B cell (primary cell): ENCODE measurements at regions of chr18 and their contacts with region 1.

Region 1: GRCh38 chr18:76922107-76922506 is 99.8 kb downstream of the ZNF236 start:
- DNase-seq: peak; percentile 83
- ATAC-seq: peak; percentile 100
- H3K4me3 ChIP-seq: no peak overlapping the region
- H3K4me3 Mint-ChIP-seq: peak overlapping the region; percentile 3
- H3K27ac ChIP-seq: no peak overlapping the region
- H3K27ac Mint-ChIP-seq: peak overlapping the region; percentile 68
- H3K4me1 ChIP-seq: peaks cover 0 to 9% of the 10 kb centered on the region in 2 donors
- H3K4me1 Mint-ChIP-seq: peaks cover 10% of the 10 kb centered on the region
- H3K27me3 ChIP-seq: no peaks in the 10 kb centered on the region
- H3K27me3 Mint-ChIP-seq: no peaks in the 10 kb centered on the region
- CTCF ChIP-seq: peak; percentile 83

Region 2: GRCh38 chr18:76932026-76932819 is 10.1 kb after region 1 on chr18:
- CTCF ChIA-PET with region 1: interaction called, 12 read pairs
- POLR2A ChIA-PET with region 1: no interaction called
- intact Hi-C with region 1: no loop called
- DNase-seq: no peak
- ATAC-seq: no peak
- H3K4me3 ChIP-seq: no peak overlapping the region
- H3K4me3 Mint-ChIP-seq: no peak overlapping the region
- H3K27ac ChIP-seq: no peak overlapping the region
- H3K27ac Mint-ChIP-seq: no peak overlapping the region
- H3K4me1 ChIP-seq: no peaks in the 10 kb centered on the region
- H3K4me1 Mint-ChIP-seq: peaks cover 6% of the 10 kb centered on the region
- H3K27me3 ChIP-seq: no peaks in the 10 kb centered on the region
- H3K27me3 Mint-ChIP-seq: no peaks in the 10 kb centered on the region
- CTCF ChIP-seq: no peak

Region 3: GRCh38 chr18:76977108-76977621 is 55.1 kb after region 1 on chr18:
- CTCF ChIA-PET with region 1: interaction called, 359 read pairs
- POLR2A ChIA-PET with region 1: interaction called, 16 read pairs
- intact Hi-C with region 1: no loop called
- DNase-seq: no peak
- ATAC-seq: no peak
- H3K4me3 ChIP-seq: no peak overlapping the region
- H3K4me3 Mint-ChIP-seq: peak overlapping the region; percentile 20
- H3K27ac ChIP-seq: peak overlapping the region in 1 of 2 donors; percentile 18
- H3K27ac Mint-ChIP-seq: peak overlapping the region; percentile 82
- H3K4me1 ChIP-seq: peaks cover 52 to 53% of the 10 kb centered on the region in 2 donors
- H3K4me1 Mint-ChIP-seq: peaks cover 62% of the 10 kb centered on the region
- H3K27me3 ChIP-seq: no peaks in the 10 kb centered on the region
- H3K27me3 Mint-ChIP-seq: no peaks in the 10 kb centered on the region
- CTCF ChIP-seq: no peak

Region 4: GRCh38 chr18:77054606-77055428 is 132.7 kb after region 1 on chr18:
- CTCF ChIA-PET with region 1: interaction called, 17 read pairs
- POLR2A ChIA-PET with region 1: no interaction called
- intact Hi-C with region 1: loop called (anchors 2 kb)
- DNase-seq: peak; percentile 91
- ATAC-seq: peak; percentile 69
- H3K4me3 ChIP-seq: peak overlapping the region; percentile 32 to 41 (median 38)
- H3K4me3 Mint-ChIP-seq: peak overlapping the region; percentile 89
- H3K27ac ChIP-seq: peak overlapping the region; percentile 92 to 96
- H3K27ac Mint-ChIP-seq: peak overlapping the region; percentile 96
- H3K4me1 ChIP-seq: peaks cover 56 to 61% of the 10 kb centered on the region in 2 donors
- H3K4me1 Mint-ChIP-seq: peaks cover 68% of the 10 kb centered on the region
- H3K27me3 ChIP-seq: no peaks in the 10 kb centered on the region
- H3K27me3 Mint-ChIP-seq: no peaks in the 10 kb centered on the region
- CTCF ChIP-seq: peak; percentile 64

Region 5: DNA sequence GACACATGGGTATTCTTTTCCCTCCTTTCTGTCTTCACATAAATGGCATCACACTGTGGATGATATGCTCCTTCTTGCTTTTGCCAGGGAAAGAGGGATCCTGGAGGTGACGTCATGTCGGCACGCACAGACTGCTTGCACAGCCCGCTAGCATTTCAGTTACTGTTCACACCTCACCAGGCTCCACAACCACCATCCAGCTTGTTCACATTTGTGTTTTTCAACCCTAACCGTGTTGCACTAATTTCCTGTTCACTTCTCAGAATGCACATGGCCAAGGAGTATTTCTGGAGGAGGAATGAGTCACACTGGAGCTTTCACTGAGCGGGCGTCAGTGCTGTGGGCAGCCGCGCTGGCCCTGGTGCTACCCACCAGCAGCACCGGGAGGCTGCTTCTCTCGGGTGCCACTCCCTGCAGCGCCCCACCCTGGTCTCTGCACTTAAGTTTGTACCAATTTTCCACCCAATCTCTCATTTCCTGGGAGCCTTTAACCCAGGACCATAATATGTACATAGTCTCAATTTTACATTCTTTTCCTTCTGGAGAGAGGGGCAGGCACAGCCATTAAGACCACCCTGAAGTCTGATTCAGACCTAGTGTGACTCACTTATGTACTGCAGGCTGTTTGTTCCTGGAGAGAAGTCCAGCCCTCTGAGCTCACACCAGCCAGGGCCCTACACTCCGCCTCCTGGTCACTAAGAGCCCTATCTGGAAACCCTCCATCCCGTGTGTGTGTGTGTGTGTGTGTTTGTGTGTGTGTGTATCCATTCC is 145.4 kb after region 1 on chr18:
- CTCF ChIA-PET with region 1: interaction called, 16 read pairs
- POLR2A ChIA-PET with region 1: no interaction called
- intact Hi-C with region 1: loop called (anchors 1 kb)
- DNase-seq: peak; percentile 48
- ATAC-seq: peak; percentile 24
- H3K4me3 ChIP-seq: peak overlapping the region in 1 of 5 experiments; percentile 49
- H3K4me3 Mint-ChIP-seq: peak overlapping the region; percentile 82
- H3K27ac ChIP-seq: peak overlapping the region; percentile 77 to 97
- H3K27ac Mint-ChIP-seq: peak overlapping the region; percentile 98
- H3K4me1 ChIP-seq: peaks cover 72 to 84% of the 10 kb centered on the region in 2 donors
- H3K4me1 Mint-ChIP-seq: peaks cover 99% of the 10 kb centered on the region
- H3K27me3 ChIP-seq: no peaks in the 10 kb centered on the region
- H3K27me3 Mint-ChIP-seq: no peaks in the 10 kb centered on the region
- CTCF ChIP-seq: no peak

Region 6: GRCh38 chr18:77469131-77469530 is 547.0 kb after region 1 on chr18:
- CTCF ChIA-PET with region 1: interaction called, 4 read pairs
- POLR2A ChIA-PET with region 1: no interaction called
- intact Hi-C with region 1: loop called (anchors 1 kb)
- DNase-seq: no peak
- ATAC-seq: no peak
- H3K4me3 ChIP-seq: no peak overlapping the region
- H3K4me3 Mint-ChIP-seq: no peak overlapping the region
- H3K27ac ChIP-seq: no peak overlapping the region
- H3K27ac Mint-ChIP-seq: no peak overlapping the region
- H3K4me1 ChIP-seq: no peaks in the 10 kb centered on the region
- H3K4me1 Mint-ChIP-seq: no peaks in the 10 kb centered on the region
- H3K27me3 ChIP-seq: peaks cover 0 to 3% (median 0%) of the 10 kb centered on the region in 4 experiments
- H3K27me3 Mint-ChIP-seq: peaks cover 20% of the 10 kb centered on the region
- CTCF ChIP-seq: peak; percentile 1

Region 7: GRCh38 chr18:77733295-77733903 is 811.3 kb after region 1 on chr18:
- CTCF ChIA-PET with region 1: no interaction called
- POLR2A ChIA-PET with region 1: no interaction called
- intact Hi-C with region 1: no loop called
- DNase-seq: no peak
- ATAC-seq: no peak
- H3K4me3 ChIP-seq: no peak overlapping the region
- H3K4me3 Mint-ChIP-seq: no peak overlapping the region
- H3K27ac ChIP-seq: no peak overlapping the region
- H3K27ac Mint-ChIP-seq: no peak overlapping the region
- H3K4me1 ChIP-seq: no peaks in the 10 kb centered on the region
- H3K4me1 Mint-ChIP-seq: no peaks in the 10 kb centered on the region
- H3K27me3 ChIP-seq: no peaks in the 10 kb centered on the region
- H3K27me3 Mint-ChIP-seq: peaks cover 5% of the 10 kb centered on the region
- CTCF ChIP-seq: no peak

Region 8: DNA sequence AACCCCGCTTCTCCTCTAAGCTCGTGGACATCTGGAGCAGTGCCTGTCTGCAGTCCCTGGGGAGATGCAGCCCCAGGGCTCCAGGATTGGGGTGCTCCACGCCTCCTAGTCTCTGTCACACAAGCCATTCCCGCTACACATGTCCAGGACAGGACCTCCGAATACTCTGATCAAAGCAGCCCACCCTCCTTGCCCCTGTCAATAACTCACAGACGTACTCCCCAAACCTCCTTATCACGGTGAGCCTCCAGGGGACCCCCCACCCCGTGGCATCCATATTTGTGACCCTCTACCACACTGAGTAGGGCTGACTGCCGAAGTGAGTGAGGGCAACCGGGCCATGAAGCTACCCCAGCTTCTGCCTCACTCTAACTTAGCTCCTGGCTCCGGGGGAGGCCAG is 1055.2 kb after region 1 on chr18:
- CTCF ChIA-PET with region 1: no interaction called
- POLR2A ChIA-PET with region 1: no interaction called
- intact Hi-C with region 1: no loop called
- DNase-seq: no peak
- ATAC-seq: no peak
- H3K4me3 ChIP-seq: no peak overlapping the region
- H3K4me3 Mint-ChIP-seq: no peak overlapping the region
- H3K27ac ChIP-seq: no peak overlapping the region
- H3K27ac Mint-ChIP-seq: no peak overlapping the region
- H3K4me1 ChIP-seq: no peaks in the 10 kb centered on the region
- H3K4me1 Mint-ChIP-seq: no peaks in the 10 kb centered on the region
- H3K27me3 ChIP-seq: no peaks in the 10 kb centered on the region
- H3K27me3 Mint-ChIP-seq: no peaks in the 10 kb centered on the region
- CTCF ChIP-seq: no peak